B cell (primary cell): ENCODE measurements at regions of chr5 and their contacts with region 1.

Region 1: DNA sequence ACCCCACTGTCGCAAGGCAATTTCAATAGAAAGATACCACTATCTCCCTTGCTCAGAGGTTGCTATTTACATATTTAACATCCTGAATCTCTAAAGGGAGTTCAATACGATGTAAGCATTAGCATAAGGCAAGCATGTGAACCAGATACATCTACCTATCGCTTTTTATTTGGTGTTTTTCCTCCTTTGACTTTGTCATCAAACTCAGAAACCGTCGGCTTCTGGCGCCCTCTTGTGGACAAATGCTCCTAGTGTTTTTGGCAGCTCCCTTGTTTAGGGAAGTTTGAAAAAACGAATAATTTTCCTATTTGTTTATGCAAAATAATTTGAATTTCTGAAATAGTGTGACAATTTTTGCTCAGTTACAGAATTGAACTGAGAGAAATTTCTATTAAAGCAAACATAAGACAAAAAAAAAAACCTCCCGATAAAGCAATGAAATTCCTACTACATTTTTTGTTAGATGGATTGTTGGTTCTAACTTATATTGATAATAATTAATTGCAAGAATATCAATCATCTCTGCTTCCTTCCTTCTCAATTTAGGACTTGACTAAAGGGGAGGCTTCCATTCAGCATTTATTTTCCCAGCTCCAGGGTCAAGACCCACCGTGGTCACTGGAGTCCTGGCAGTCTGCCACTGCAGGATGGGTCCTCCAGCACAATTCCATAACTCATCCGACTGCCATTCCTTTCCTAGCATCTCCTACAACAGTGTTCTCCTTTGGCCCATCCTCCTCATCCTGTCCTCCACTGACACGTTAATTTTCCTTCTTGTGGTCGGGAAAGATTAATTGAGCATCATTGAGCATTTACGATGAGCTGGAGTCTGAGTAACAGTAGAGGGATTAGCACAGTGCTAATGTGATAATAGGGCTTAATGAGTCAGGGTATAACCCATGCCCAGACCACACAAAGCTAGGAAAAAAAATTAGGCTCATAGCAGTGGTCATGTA is 131.8 kb upstream of the CHD1 start:
- DNase-seq: peak; percentile 89
- ATAC-seq: peak; percentile 66
- H3K4me3 ChIP-seq: peak overlapping the region in 3 of 5 experiments; percentile 18 to 47 (median 25)
- H3K4me3 Mint-ChIP-seq: peak overlapping the region; percentile 74
- H3K27ac ChIP-seq: peak overlapping the region; percentile 22 to 56
- H3K27ac Mint-ChIP-seq: peak overlapping the region; percentile 73
- H3K4me1 ChIP-seq: peaks cover 24 to 41% of the 10 kb centered on the region in 2 donors
- H3K4me1 Mint-ChIP-seq: peaks cover 40% of the 10 kb centered on the region
- H3K27me3 ChIP-seq: no peaks in the 10 kb centered on the region
- H3K27me3 Mint-ChIP-seq: no peaks in the 10 kb centered on the region
- CTCF ChIP-seq: peak; percentile 89

Region 2: GRCh38 chr5:97183100-97183929 is 1877.3 kb before region 1 on chr5 and contains the start of gene RIOK2:
- CTCF ChIA-PET with region 1: no interaction called
- POLR2A ChIA-PET with region 1: no interaction called
- intact Hi-C with region 1: loop called (anchors 1 kb)
- DNase-seq: peak; percentile 93
- ATAC-seq: peak; percentile 87
- H3K4me3 ChIP-seq: peak within 1 kb of the TSS; percentile 68 to 96 (median 88)
- H3K4me3 Mint-ChIP-seq: peak within 1 kb of the TSS; percentile 97
- H3K27ac ChIP-seq: peak within 1 kb of the TSS; percentile 91 to 99
- H3K27ac Mint-ChIP-seq: peak within 1 kb of the TSS; percentile 100
- H3K4me1 ChIP-seq: peaks cover 12 to 15% of the 10 kb centered on the region in 2 donors
- H3K4me1 Mint-ChIP-seq: peaks cover 33% of the 10 kb centered on the region
- H3K27me3 ChIP-seq: no peaks in the 10 kb centered on the region
- H3K27me3 Mint-ChIP-seq: no peaks in the 10 kb centered on the region
- CTCF ChIP-seq: no peak
- total RNA-seq, gene RIOK2: 32.8 and 37.2 TPM in 2 replicates

Region 3: GRCh38 chr5:98773464-98774191 is 287.0 kb before region 1 on chr5 and contains the start of gene RGMB:
- CTCF ChIA-PET with region 1: interaction called, 3 read pairs
- POLR2A ChIA-PET with region 1: no interaction called
- intact Hi-C with region 1: loop called (anchors 1 kb)
- DNase-seq: peak; percentile 96
- ATAC-seq: peak; percentile 88
- H3K4me3 ChIP-seq: peak within 1 kb of the TSS; percentile 55 to 94 (median 78)
- H3K4me3 Mint-ChIP-seq: peak within 1 kb of the TSS; percentile 96
- H3K27ac ChIP-seq: peak within 1 kb of the TSS; percentile 63 to 78
- H3K27ac Mint-ChIP-seq: peak within 1 kb of the TSS; percentile 93
- H3K4me1 ChIP-seq: peaks cover 38 to 53% of the 10 kb centered on the region in 2 donors
- H3K4me1 Mint-ChIP-seq: peaks cover 56% of the 10 kb centered on the region
- H3K27me3 ChIP-seq: peaks cover 0 to 17% (median 8%) of the 10 kb centered on the region in 4 experiments
- H3K27me3 Mint-ChIP-seq: peaks cover under 1% of the 10 kb centered on the region
- CTCF ChIP-seq: no peak
- total RNA-seq, gene RGMB: 17.1 and 18.3 TPM in 2 replicates

Region 4: DNA sequence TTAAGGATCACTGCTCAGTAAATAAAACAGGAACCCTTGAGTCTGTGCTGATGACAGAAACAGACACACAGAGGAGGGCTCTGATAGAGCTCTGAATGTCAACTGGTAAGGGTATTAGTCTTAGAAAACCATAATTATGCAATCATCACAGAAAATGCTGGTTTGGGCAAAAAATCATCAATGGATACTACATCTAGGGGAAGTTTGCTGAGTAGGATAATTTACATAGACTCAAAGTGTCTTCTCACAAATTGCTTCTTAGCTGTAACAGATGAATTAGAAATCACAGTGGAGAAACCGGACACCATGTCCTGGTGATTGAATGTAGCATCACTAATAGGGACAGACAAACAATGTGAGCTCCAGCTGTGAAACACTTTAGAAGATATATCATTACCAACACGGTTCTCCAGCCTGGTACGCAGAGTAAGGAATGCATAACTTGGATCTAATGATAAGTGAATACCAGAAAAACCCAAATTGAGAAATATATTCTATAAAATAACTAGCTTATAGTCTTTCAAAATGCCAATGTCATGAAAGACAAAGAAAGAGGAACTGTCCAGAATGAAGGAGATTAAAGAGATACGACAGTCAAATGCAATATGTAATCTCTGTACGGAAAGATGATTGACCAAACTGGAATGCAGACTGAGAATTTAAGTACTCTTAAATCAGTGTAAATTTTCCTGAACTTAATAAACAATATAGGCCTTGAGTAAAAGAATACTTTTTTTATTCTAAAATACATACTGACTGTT is 149.1 kb before region 1 on chr5:
- CTCF ChIA-PET with region 1: interaction called, 50 read pairs
- POLR2A ChIA-PET with region 1: no interaction called
- intact Hi-C with region 1: loop called (anchors 1 kb)
- DNase-seq: no peak
- ATAC-seq: no peak
- H3K4me3 ChIP-seq: no peak overlapping the region
- H3K4me3 Mint-ChIP-seq: no peak overlapping the region
- H3K27ac ChIP-seq: peak overlapping the region in 1 of 2 donors; percentile 36
- H3K27ac Mint-ChIP-seq: peak overlapping the region; percentile 11
- H3K4me1 ChIP-seq: peaks cover 10 to 15% of the 10 kb centered on the region in 2 donors
- H3K4me1 Mint-ChIP-seq: peaks cover 57% of the 10 kb centered on the region
- H3K27me3 ChIP-seq: no peaks in the 10 kb centered on the region
- H3K27me3 Mint-ChIP-seq: no peaks in the 10 kb centered on the region
- CTCF ChIP-seq: no peak

Region 5: DNA sequence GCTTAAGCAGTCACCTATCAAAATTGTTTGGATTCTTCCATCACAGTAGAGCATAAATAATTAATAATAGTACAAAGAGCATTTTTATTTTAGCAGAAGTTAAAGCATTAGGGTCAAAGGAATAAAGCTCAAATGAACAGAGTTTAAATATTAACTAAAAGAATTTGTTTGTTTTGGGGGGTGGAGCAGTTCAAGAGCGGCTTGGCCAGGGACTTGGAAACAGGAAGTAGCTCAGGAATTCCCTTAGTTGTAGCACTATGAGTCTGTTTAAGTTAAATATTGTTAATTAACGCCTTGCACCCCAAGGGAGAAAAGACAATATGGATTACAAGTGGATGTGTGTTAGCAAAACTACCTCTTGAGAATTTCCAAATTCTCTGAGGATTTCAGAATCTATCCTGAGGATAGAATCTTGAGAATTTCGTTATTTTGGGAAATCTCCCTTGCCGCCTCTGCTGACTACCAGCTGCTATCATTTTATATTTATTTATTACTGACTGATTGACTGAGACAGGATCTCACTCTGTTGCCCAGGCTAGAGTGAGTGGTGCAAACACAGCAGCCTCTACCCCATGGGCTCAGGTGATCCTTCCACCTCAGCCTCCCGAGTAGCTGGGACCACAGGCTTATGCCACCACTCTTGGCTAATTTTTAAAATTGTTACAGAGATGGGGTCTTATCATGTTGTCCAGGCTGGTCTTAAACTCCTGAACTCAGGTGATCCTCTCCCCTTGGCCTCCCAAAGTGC is 35.1 kb before region 1 on chr5:
- CTCF ChIA-PET with region 1: interaction called, 12 read pairs
- POLR2A ChIA-PET with region 1: interaction called, 3 read pairs
- intact Hi-C with region 1: loop called (anchors 1 kb)
- DNase-seq: no peak
- ATAC-seq: no peak
- H3K4me3 ChIP-seq: no peak overlapping the region
- H3K4me3 Mint-ChIP-seq: no peak overlapping the region
- H3K27ac ChIP-seq: peak overlapping the region in 1 of 2 donors; percentile 75
- H3K27ac Mint-ChIP-seq: peak overlapping the region; percentile 37
- H3K4me1 ChIP-seq: peaks cover 43 to 46% of the 10 kb centered on the region in 2 donors
- H3K4me1 Mint-ChIP-seq: peaks cover 45% of the 10 kb centered on the region
- H3K27me3 ChIP-seq: no peaks in the 10 kb centered on the region
- H3K27me3 Mint-ChIP-seq: no peaks in the 10 kb centered on the region
- CTCF ChIP-seq: no peak